ENCODE measurements at regions of chr1 and their contacts with region 1.

Region 1: GRCh38 chr1:64823691-64824476 is 79.0 kb downstream of the RAVER2 start:
- DNase-seq: no peak
- H3K4me3 ChIP-seq: peak overlapping the region in 2 of 8 donors; percentile 13 to 17
- H3K27ac ChIP-seq: no peak overlapping the region
- H3K4me1 ChIP-seq: peaks cover 5 to 30% (median 14%) of the 10 kb centered on the region in 6 donors
- H3K27me3 ChIP-seq: no peaks in the 10 kb centered on the region
- CTCF ChIP-seq: peak; percentile 66 to 90 (median 83)
- POLR2A ChIP-seq: no peak

Region 2: GRCh38 chr1:64268653-64269557 is 555.0 kb before region 1 on chr1:
- intact Hi-C with region 1: loop called (anchors 5 kb)
- DNase-seq: no peak
- H3K4me3 ChIP-seq: no peak overlapping the region
- H3K27ac ChIP-seq: peak overlapping the region in 1 of 8 donors; percentile 19
- H3K4me1 ChIP-seq: peaks cover 0 to 7% (median 5%) of the 10 kb centered on the region in 6 donors
- H3K27me3 ChIP-seq: no peaks in the 10 kb centered on the region
- CTCF ChIP-seq: peak in 10 of 11 experiments; percentile 33 to 78 (median 64)
- POLR2A ChIP-seq: no peak

Region 3: GRCh38 chr1:64686828-64687724 is 136.8 kb before region 1 on chr1:
- intact Hi-C with region 1: loop called (anchors 5 kb)
- DNase-seq: no peak
- H3K4me3 ChIP-seq: no peak overlapping the region
- H3K27ac ChIP-seq: peak overlapping the region in 2 of 8 donors; percentile 48 to 52
- H3K4me1 ChIP-seq: peaks cover 0 to 29% (median 16%) of the 10 kb centered on the region in 6 donors
- H3K27me3 ChIP-seq: no peaks in the 10 kb centered on the region
- CTCF ChIP-seq: peak; percentile 35 to 82 (median 70)
- POLR2A ChIP-seq: no peak

Region 4: GRCh38 chr1:64766385-64766784 is 57.5 kb before region 1 on chr1:
- intact Hi-C with region 1: no loop called
- DNase-seq: no peak
- H3K4me3 ChIP-seq: no peak overlapping the region
- H3K27ac ChIP-seq: no peak overlapping the region
- H3K4me1 ChIP-seq: peaks cover 0 to 10% (median 0%) of the 10 kb centered on the region in 6 donors
- H3K27me3 ChIP-seq: no peaks in the 10 kb centered on the region
- CTCF ChIP-seq: no peak
- POLR2A ChIP-seq: no peak